ENCODE measurements at regions of chr17 and their contacts with region 1.

Region 1: DNA sequence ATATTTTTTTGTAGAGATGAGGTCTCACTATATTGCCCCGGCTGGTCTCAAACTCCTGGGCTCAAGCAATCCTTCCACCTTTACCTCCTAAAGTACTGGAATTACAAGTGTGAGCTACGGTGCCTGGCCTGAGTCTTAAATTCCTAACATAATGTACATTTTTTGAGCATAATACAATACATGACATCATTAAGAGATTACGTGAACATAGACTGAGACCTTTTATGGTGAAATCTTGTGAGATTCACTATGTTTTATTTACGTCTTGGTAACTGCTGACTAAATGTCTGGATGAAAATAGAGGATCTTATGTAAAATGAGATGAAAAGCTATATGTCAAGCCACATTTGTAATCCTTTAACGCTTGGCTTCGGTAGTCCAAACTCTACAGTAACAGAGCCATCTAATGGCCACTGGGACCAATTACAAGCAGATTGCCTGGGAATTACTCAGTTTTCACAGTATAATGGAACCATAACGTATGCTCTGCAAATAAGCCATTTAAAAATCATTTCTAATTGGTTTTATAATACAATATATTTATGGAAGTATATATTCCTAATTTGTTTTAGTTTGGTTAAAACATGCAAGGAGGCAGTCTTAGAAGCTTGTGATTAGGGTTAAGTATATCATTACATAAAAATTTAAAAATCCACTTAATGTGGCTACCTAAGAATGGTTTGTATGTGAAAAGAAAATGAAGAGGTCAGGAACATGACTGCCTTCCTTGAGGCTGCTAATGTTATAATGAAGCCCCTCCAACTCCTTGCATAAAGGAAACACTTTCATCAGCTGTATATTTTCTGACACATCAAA is 8.1 kb upstream of the EFCAB13 start:
- DNase-seq: no peak
- H3K4me3 ChIP-seq: no peak overlapping the region
- H3K27ac ChIP-seq: no peak overlapping the region
- H3K4me1 ChIP-seq: peaks cover 0 to 2% (median under 1%) of the 10 kb centered on the region in 4 experiments; a peak in 3 of 7 replicates
- H3K27me3 ChIP-seq: no peaks in the 10 kb centered on the region
- CTCF ChIP-seq: peak in 2 of 3 experiments; percentile 82 to 83; a peak in 3 of 4 replicates
- EP300 ChIP-seq: no peak
- POLR2A ChIP-seq: no peak
- RAD21 ChIP-seq: peak; percentile 95 to 98

Region 2: DNA sequence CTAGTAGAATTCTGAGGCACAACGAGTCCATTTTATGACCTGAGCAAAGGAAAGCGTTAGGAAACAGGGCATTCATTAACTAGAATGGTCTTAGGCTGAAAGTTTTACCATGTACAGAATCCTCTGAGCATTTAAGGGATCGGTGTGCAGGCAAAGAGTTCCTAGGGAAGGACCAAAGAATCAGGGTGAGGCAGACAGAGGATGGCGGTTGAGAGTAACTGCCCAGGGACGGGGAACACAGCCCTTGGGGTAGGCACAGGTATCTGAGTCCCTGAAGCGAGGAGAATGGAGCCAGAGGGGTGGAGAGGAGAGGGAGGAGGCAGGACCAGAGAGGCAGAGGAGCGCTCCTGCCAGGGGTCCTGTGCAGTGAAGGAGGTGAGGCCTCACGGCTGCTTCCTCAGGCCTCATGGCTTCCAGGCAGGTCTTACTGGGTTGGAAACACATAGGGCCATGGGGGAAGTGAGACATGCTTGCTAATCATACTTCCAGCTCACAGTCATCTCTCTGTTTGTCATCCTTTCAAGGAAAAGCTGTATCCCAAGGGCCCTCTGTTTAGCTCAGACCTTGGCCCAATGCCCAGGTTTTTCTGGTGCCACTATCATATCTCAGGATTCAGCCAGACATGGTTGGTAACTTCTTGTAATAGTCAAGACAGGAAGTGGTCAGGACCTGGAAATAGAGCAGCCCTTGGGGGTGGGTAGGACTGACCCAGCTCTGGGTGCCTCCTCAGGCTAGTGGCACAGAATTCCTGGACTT is 75.9 kb before region 1 on chr17:
- CTCF ChIA-PET with region 1: interaction called, 105 read pairs
- POLR2A ChIA-PET with region 1: no interaction called
- DNase-seq: no peak
- H3K4me3 ChIP-seq: no peak overlapping the region
- H3K27ac ChIP-seq: no peak overlapping the region
- H3K4me1 ChIP-seq: peaks cover 0 to 3% (median 0%) of the 10 kb centered on the region in 4 experiments; a peak in 1 of 7 replicates
- H3K27me3 ChIP-seq: peaks cover 0 to 2% (median 0%) of the 10 kb centered on the region in 4 experiments; a peak in 1 of 7 replicates
- CTCF ChIP-seq: no peak
- EP300 ChIP-seq: no peak
- POLR2A ChIP-seq: no peak
- RAD21 ChIP-seq: no peak

Region 3: GRCh38 chr17:47305302-47305923 is 10.2 kb before region 1 on chr17:
- CTCF ChIA-PET with region 1: interaction called, 12 read pairs
- POLR2A ChIA-PET with region 1: interaction called, 4 read pairs
- DNase-seq: no peak
- H3K4me3 ChIP-seq: no peak overlapping the region
- H3K27ac ChIP-seq: no peak overlapping the region
- H3K4me1 ChIP-seq: peaks cover 0 to 3% (median under 1%) of the 10 kb centered on the region in 4 experiments; a peak in 4 of 7 replicates
- H3K27me3 ChIP-seq: no peaks in the 10 kb centered on the region
- CTCF ChIP-seq: no peak
- EP300 ChIP-seq: no peak
- POLR2A ChIP-seq: no peak
- RAD21 ChIP-seq: no peak

Measured in H1 (cell line).